MCF 10A (cell line): ENCODE measurements at regions of chr6 and their contacts with region 1.

Region 1: GRCh38 chr6:147397306-147397705 is 111.2 kb upstream of the SAMD5 start:
- DNase-seq: no peak
- H3K4me3 Mint-ChIP-seq: no peak overlapping the region
- H3K27ac Mint-ChIP-seq: no peak overlapping the region
- H3K4me1 Mint-ChIP-seq: no peaks in the 10 kb centered on the region
- H3K27me3 Mint-ChIP-seq: no peaks in the 10 kb centered on the region
- CTCF ChIP-seq: no peak

Region 2: GRCh38 chr6:147382945-147383554 is 14.3 kb before region 1 on chr6:
- CTCF ChIA-PET with region 1: interaction called, 19 read pairs
- POLR2A ChIA-PET with region 1: interaction called, 4 read pairs
- intact Hi-C with region 1: no loop called
- DNase-seq: peak; percentile 50
- H3K4me3 Mint-ChIP-seq: no peak overlapping the region
- H3K27ac Mint-ChIP-seq: no peak overlapping the region
- H3K4me1 Mint-ChIP-seq: no peaks in the 10 kb centered on the region
- H3K27me3 Mint-ChIP-seq: no peaks in the 10 kb centered on the region
- CTCF ChIP-seq: peak; percentile 51